Prostate gland (tissue), 2 donors: ENCODE measurements at regions of chr12 and their contacts with region 1.

Region 1: GRCh38 chr12:55996715-55997534 is at the start of gene SUOX:
- DNase-seq: peak; percentile 98
- H3K4me3 ChIP-seq: peak within 1 kb of the TSS; percentile 51 to 71
- H3K27ac ChIP-seq: peak within 1 kb of the TSS; percentile 81 to 82
- H3K4me1 ChIP-seq: peaks cover 6% of the 10 kb centered on the region
- H3K27me3 ChIP-seq: no peaks in the 10 kb centered on the region
- CTCF ChIP-seq: peak in 1 of 4 experiments; percentile 29
- POLR2A ChIP-seq: peak; percentile 74
- total RNA-seq, gene SUOX: 23.6 to 49.6 TPM

Region 2: GRCh38 chr12:55760663-55761062 is 236.3 kb before region 1 on chr12:
- intact Hi-C with region 1: no loop called
- DNase-seq: no peak
- H3K4me3 ChIP-seq: no peak overlapping the region
- H3K27ac ChIP-seq: no peak overlapping the region
- H3K4me1 ChIP-seq: no peaks in the 10 kb centered on the region
- H3K27me3 ChIP-seq: no peaks in the 10 kb centered on the region
- CTCF ChIP-seq: no peak
- POLR2A ChIP-seq: no peak

Region 3: DNA sequence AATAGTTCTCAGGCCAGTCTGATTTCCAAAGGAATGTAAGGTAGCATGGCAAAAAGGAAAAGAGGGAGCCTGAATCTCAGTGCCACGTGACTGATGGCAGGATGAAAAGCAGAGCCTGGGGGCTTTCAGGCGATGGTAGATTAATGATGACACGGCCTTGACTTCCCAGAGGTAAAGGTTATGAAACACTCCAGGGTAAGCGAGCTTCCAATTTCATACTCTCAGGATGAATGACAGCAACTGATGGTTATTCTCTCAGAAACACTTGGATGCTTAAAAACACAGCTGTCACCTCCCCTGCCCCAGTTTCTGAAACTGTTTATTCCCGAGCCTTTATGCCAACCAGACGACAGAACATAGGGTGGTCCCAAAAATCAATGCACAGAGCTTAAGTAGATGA is 225.2 kb before region 1 on chr12:
- intact Hi-C with region 1: no loop called
- DNase-seq: no peak
- H3K4me3 ChIP-seq: no peak overlapping the region
- H3K27ac ChIP-seq: no peak overlapping the region
- H3K4me1 ChIP-seq: no peaks in the 10 kb centered on the region
- H3K27me3 ChIP-seq: no peaks in the 10 kb centered on the region
- CTCF ChIP-seq: no peak
- POLR2A ChIP-seq: no peak

Region 4: GRCh38 chr12:56029666-56030293 is 32.9 kb after region 1 on chr12:
- intact Hi-C with region 1: loop called (anchors 5 kb)
- DNase-seq: peak; percentile 27
- H3K4me3 ChIP-seq: no peak overlapping the region
- H3K27ac ChIP-seq: peak overlapping the region in 1 of 2 donors; percentile 39
- H3K4me1 ChIP-seq: peaks cover 4% of the 10 kb centered on the region
- H3K27me3 ChIP-seq: no peaks in the 10 kb centered on the region
- CTCF ChIP-seq: peak in 3 of 4 experiments; percentile 60 to 70 (median 68)
- POLR2A ChIP-seq: no peak

Region 5: GRCh38 chr12:56104109-56104814 is 107.3 kb after region 1 on chr12 and contains the start of gene PA2G4:
- intact Hi-C with region 1: loop called (anchors 10 kb)
- DNase-seq: peak; percentile 98
- H3K4me3 ChIP-seq: peak within 1 kb of the TSS; percentile 80
- H3K27ac ChIP-seq: peak within 1 kb of the TSS; percentile 86 to 88
- H3K4me1 ChIP-seq: peaks cover 10% of the 10 kb centered on the region
- H3K27me3 ChIP-seq: no peaks in the 10 kb centered on the region
- CTCF ChIP-seq: peak in 2 of 4 experiments; percentile 6 to 21
- POLR2A ChIP-seq: peak; percentile 80
- total RNA-seq, gene PA2G4: 75.0 to 93.3 TPM

Region 6: DNA sequence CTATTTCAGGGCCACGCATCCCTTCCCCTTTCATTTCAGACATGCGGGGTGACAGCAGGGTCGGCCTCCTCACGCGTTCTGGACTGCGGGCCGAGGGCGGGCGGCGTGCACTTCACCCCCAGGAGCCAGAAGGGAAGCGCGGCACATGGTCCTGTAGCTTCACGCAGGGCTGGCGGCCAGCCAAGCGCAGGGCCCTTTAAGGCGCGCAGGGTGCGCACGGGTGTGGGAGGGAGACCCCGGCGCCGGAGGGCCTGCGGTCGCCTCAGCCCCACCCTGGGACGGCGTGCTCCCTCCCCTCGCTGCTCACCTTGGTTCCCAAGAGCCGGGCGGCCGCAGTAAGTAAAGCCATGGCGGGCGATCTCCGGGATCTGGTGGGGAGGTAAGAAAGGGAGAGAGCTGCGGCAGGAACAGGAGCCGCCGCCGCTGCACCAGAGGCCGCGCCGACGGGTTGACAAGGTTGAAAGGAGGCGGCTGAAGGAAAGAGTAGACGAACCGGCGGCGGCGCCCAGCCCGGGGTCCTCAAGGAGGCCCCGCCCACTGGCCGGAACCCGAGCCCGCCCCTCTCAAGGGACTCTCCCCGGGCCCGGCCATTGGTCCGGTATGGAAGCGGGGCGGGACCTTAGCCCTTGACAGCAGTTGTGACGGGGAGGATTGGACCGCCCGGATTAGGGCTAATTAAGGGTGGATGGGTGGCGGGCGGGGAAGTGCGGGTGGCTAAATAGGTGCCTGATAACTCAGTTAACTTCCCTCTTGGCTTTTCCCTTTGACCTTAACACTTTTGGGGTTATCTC is 303.1 kb after region 1 on chr12 and contains the start of gene CS:
- intact Hi-C with region 1: no loop called
- DNase-seq: peak; percentile 99
- H3K4me3 ChIP-seq: peak within 1 kb of the TSS; percentile 86 to 91
- H3K27ac ChIP-seq: peak within 1 kb of the TSS; percentile 92 to 95
- H3K4me1 ChIP-seq: peaks cover 15% of the 10 kb centered on the region
- H3K27me3 ChIP-seq: no peaks in the 10 kb centered on the region
- CTCF ChIP-seq: no peak
- POLR2A ChIP-seq: peak; percentile 62
- total RNA-seq, gene CS: 106 to 110 TPM